CD4-positive, alpha-beta T cell (primary cell): ENCODE measurements at regions of chr19 and their contacts with region 1.

Region 1: DNA sequence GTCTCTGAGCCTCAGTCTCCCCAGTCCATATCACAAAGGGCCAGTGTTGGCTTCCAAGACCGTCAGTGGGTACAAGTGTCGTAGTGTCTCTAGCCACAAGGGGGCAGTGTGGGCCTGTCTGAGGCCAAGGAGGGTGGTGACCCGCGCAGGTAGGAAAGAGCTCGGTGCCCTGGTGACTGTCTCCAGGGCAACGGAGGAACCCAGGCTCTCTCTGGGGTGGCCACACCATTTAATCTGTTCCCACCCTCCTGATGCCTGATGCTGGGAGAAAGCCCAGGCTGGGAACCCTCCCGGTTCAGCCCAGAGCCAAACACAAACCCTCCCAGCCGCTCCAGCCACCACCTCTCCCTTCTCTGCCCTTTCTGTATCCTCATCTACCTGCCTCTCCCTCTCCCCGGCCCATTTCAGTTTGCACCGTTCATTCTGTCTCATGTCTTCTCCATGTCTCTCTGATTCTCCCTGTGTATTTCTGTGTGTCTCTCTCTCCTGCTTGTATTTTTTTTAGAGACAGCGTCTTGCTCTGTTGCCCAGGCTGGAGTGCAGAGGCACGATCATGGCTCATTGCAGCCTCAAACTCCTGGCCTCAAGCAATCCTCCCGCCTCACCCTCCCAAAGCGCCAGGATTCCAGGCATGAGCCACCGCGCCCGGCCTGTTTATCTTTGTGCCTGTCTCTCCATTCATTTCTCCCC is 17.5 kb upstream of the MEIS3 start:
- DNase-seq: peak; percentile 77 to 91 (median 81)
- ATAC-seq: peak; percentile 95
- H3K4me3 ChIP-seq: no peak overlapping the region
- H3K4me3 Mint-ChIP-seq: peak overlapping the region; percentile 11
- H3K27ac ChIP-seq: no peak overlapping the region
- H3K27ac Mint-ChIP-seq: no peak overlapping the region
- H3K4me1 ChIP-seq: peaks cover 15% of the 10 kb centered on the region
- H3K4me1 Mint-ChIP-seq: peaks cover 14% of the 10 kb centered on the region
- H3K27me3 ChIP-seq: peaks cover 21 to 24% of the 10 kb centered on the region in 2 experiments
- H3K27me3 Mint-ChIP-seq: peaks cover 74% of the 10 kb centered on the region
- CTCF ChIP-seq: peak; percentile 92

Region 2: GRCh38 chr19:47330466-47330869 is 106.4 kb before region 1 on chr19:
- CTCF ChIA-PET with region 1: no interaction called
- POLR2A ChIA-PET with region 1: no interaction called
- intact Hi-C with region 1: no loop called
- DNase-seq: no peak
- ATAC-seq: no peak
- H3K4me3 ChIP-seq: no peak overlapping the region
- H3K4me3 Mint-ChIP-seq: no peak overlapping the region
- H3K27ac ChIP-seq: no peak overlapping the region
- H3K27ac Mint-ChIP-seq: no peak overlapping the region
- H3K4me1 ChIP-seq: peaks cover 5% of the 10 kb centered on the region
- H3K4me1 Mint-ChIP-seq: no peaks in the 10 kb centered on the region
- H3K27me3 ChIP-seq: no peaks in the 10 kb centered on the region
- H3K27me3 Mint-ChIP-seq: peaks cover 8% of the 10 kb centered on the region
- CTCF ChIP-seq: no peak

Region 3: DNA sequence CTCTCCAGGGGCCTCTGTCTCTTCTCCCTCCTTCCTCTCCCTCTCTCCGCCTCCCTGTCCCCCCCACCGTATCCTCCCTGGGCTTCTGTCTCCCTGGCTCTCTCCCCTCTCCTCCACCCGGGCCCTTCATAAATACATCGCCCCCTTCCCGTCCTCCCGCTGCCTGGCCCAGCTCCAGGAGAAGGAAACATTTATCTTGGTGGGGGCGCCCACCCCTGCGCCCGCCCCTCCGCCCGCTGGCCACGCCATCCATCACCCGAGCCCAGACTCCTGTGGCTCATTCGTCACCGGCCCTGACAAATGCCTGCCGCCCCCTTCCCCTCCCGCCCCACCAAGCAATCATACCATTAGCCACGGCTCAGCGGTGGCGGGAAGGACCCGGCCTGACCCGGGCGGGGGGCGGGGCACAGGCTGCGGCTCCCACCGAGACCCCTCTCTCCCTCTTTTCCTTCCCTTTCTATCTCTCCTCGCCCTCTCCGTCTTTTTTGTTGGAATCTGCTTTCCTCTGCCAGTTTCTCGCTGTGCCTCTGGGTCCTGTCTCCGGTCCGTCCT is 14.9 kb before region 1 on chr19:
- CTCF ChIA-PET with region 1: no interaction called
- POLR2A ChIA-PET with region 1: no interaction called
- intact Hi-C with region 1: no loop called
- DNase-seq: peak in 1 of 14 experiments; percentile 18
- ATAC-seq: no peak
- H3K4me3 ChIP-seq: no peak overlapping the region
- H3K4me3 Mint-ChIP-seq: no peak overlapping the region
- H3K27ac ChIP-seq: no peak overlapping the region
- H3K27ac Mint-ChIP-seq: no peak overlapping the region
- H3K4me1 ChIP-seq: peaks cover 45% of the 10 kb centered on the region
- H3K4me1 Mint-ChIP-seq: peaks cover 42% of the 10 kb centered on the region
- H3K27me3 ChIP-seq: peaks cover 74 to 84% of the 10 kb centered on the region in 2 experiments
- H3K27me3 Mint-ChIP-seq: peaks cover 83% of the 10 kb centered on the region
- CTCF ChIP-seq: no peak

Region 4: DNA sequence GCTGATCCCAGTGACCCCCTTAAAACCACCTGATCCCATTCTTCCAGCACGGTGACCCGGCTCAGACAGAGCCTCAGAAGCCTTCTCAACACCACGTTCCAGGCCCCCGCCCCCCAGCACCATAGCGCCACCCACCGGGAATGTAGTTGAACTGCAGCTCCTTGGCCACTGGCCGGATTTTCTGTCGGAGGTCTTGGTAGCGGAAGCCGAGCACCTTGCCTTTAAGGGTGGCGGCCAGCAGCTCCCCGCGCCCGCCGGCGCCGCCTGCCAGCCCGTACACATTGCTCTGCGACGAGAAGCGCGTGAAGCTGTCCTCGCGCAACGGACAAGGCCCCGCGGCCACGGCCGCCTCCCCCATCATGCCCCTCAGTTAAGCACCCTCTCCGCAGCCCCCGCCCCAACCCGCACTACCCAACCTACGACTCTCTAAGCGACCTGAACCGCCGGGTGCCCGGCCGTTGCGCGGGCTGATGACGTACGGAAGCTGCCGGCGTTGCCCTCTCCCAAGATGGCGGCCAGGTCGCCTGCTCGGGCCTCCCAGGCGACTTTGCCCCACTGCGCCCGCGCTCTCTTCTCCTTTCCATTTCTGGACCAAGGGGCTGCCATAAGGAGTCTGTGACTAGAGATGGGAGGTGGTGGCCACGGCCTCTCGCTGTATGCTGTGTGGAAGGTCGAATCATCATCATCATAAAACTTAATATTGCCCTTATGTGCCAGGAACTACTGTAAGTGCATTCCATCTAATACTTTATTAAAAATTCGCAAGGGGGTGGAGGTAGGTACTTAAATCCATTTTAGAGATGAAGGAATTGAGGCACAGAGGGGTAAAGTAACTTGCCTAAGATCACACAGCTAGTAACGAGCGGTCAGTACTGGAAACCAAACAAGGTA is 47.2 kb after region 1 on chr19 and contains the start of gene KPTN:
- CTCF ChIA-PET with region 1: interaction called, 21 read pairs
- POLR2A ChIA-PET with region 1: interaction called, 3 read pairs
- intact Hi-C with region 1: loop called in 1 of 2 experiments (anchors 5 kb)
- DNase-seq: peak; percentile 78 to 94 (median 83)
- ATAC-seq: peak; percentile 83
- H3K4me3 ChIP-seq: peak within 1 kb of the TSS; percentile 82
- H3K4me3 Mint-ChIP-seq: peak within 1 kb of the TSS; percentile 97
- H3K27ac ChIP-seq: peak within 1 kb of the TSS; percentile 73 to 94
- H3K27ac Mint-ChIP-seq: peak within 1 kb of the TSS; percentile 96
- H3K4me1 ChIP-seq: peaks cover 33% of the 10 kb centered on the region
- H3K4me1 Mint-ChIP-seq: peaks cover 37% of the 10 kb centered on the region
- H3K27me3 ChIP-seq: no peaks in the 10 kb centered on the region
- H3K27me3 Mint-ChIP-seq: no peaks in the 10 kb centered on the region
- CTCF ChIP-seq: peak; percentile 75
- total RNA-seq, gene KPTN: 3.6 to 4.5 TPM

Region 5: DNA sequence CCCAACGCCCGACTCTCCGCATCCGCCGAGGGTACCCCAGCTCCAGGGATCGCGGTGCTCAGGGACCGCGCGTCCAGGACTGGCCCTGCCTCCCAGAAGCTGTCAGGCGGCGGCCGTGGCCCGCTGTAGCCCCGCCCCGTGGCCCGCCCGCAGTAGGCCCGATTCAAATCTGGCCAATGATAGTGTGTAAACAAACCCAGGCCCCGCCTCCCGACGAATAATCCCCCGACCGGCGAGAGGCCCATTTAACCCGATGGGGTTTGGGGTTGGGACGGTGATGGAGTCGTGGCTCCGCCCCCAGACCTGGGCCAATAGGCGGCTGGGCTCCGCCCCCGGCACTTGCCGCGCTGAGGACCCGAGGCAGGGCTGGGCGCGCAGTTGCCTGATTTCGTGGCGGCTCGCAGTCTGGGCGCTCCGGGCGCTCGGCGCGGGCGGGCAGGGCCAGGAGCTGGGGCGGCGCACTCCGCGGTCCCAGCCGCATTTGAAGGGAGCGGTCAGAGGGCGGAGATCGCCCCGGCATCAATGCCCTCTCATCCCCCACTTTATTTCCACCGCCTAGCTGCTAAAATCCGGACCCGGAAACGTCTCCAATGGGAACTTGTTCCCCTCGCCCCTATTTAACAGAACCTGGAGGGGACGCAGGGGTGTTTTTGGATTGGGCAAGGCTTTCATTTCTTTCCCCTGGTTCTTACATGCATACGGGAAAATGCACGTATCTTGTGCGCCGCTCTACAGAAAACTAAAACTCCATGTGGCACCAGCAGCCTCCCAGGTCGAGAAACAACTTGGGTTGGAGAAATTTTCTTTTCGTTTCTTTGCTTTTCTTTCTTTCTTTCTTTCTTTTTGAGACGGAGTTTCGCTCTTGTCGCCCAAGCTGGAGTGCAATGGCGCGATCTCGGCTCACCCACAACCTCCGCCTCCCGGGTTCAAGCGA is 163.7 kb after region 1 on chr19:
- CTCF ChIA-PET with region 1: interaction called, 3 read pairs
- POLR2A ChIA-PET with region 1: no interaction called
- intact Hi-C with region 1: loop called in 1 of 2 experiments (anchors 10 kb)
- DNase-seq: peak; percentile 98 to 100 (median 100)
- ATAC-seq: peak; percentile 97
- H3K4me3 ChIP-seq: peak overlapping the region; percentile 80
- H3K4me3 Mint-ChIP-seq: peak overlapping the region; percentile 86
- H3K27ac ChIP-seq: peak overlapping the region; percentile 55 to 79
- H3K27ac Mint-ChIP-seq: peak overlapping the region; percentile 89
- H3K4me1 ChIP-seq: peaks cover 24% of the 10 kb centered on the region
- H3K4me1 Mint-ChIP-seq: peaks cover 20% of the 10 kb centered on the region
- H3K27me3 ChIP-seq: no peaks in the 10 kb centered on the region
- H3K27me3 Mint-ChIP-seq: no peaks in the 10 kb centered on the region
- CTCF ChIP-seq: no peak

Region 6: GRCh38 chr19:47697863-47698609 is 261.2 kb after region 1 on chr19:
- CTCF ChIA-PET with region 1: interaction called, 50 read pairs
- POLR2A ChIA-PET with region 1: interaction called, 5 read pairs
- intact Hi-C with region 1: loop called (anchors 1 kb)
- DNase-seq: peak; percentile 16 to 75 (median 42)
- ATAC-seq: peak; percentile 77
- H3K4me3 ChIP-seq: no peak overlapping the region
- H3K4me3 Mint-ChIP-seq: no peak overlapping the region
- H3K27ac ChIP-seq: no peak overlapping the region
- H3K27ac Mint-ChIP-seq: no peak overlapping the region
- H3K4me1 ChIP-seq: peaks cover 6% of the 10 kb centered on the region
- H3K4me1 Mint-ChIP-seq: peaks cover 4% of the 10 kb centered on the region
- H3K27me3 ChIP-seq: no peaks in the 10 kb centered on the region
- H3K27me3 Mint-ChIP-seq: no peaks in the 10 kb centered on the region
- CTCF ChIP-seq: peak; percentile 86

Region 7: GRCh38 chr19:47713046-47714021 is 276.5 kb after region 1 on chr19 and contains the start of gene EHD2:
- CTCF ChIA-PET with region 1: interaction called, 10 read pairs
- POLR2A ChIA-PET with region 1: no interaction called
- intact Hi-C with region 1: no loop called
- DNase-seq: peak in 10 of 14 experiments; percentile 9 to 62 (median 27)
- ATAC-seq: peak; percentile 34
- H3K4me3 ChIP-seq: no peak within 1 kb of the TSS
- H3K4me3 Mint-ChIP-seq: no peak within 1 kb of the TSS
- H3K27ac ChIP-seq: no peak within 1 kb of the TSS
- H3K27ac Mint-ChIP-seq: no peak within 1 kb of the TSS
- H3K4me1 ChIP-seq: peaks cover 5% of the 10 kb centered on the region
- H3K4me1 Mint-ChIP-seq: peaks cover 4% of the 10 kb centered on the region
- H3K27me3 ChIP-seq: peaks cover 22 to 24% of the 10 kb centered on the region in 2 experiments
- H3K27me3 Mint-ChIP-seq: peaks cover 49% of the 10 kb centered on the region
- CTCF ChIP-seq: peak; percentile 78
- total RNA-seq, gene EHD2: 0.16 TPM in 1 of 2 experiments, not detected in the other